Activated CD8-positive, alpha-beta T cell treated with anti-CD3 and anti-CD28 coated beads for 36 hours (primary cell): ENCODE measurements at regions of chr7 and their contacts with region 1.

Region 1: GRCh38 chr7:5677538-5678294 is 103.7 kb downstream of the RNF216 start:
- DNase-seq: peak; percentile 70
- ATAC-seq: peak; percentile 52
- H3K4me3 Mint-ChIP-seq: no peak overlapping the region
- H3K27ac Mint-ChIP-seq: peak overlapping the region; percentile 53
- H3K4me1 Mint-ChIP-seq: peaks cover 55% of the 10 kb centered on the region
- H3K27me3 Mint-ChIP-seq: no peaks in the 10 kb centered on the region
- CTCF ChIP-seq: peak; percentile 47

Region 2: GRCh38 chr7:5501465-5501864 is 176.3 kb before region 1 on chr7:
- CTCF ChIA-PET with region 1: no interaction called
- POLR2A ChIA-PET with region 1: no interaction called
- intact Hi-C with region 1: no loop called
- DNase-seq: no peak
- ATAC-seq: no peak
- H3K4me3 Mint-ChIP-seq: no peak overlapping the region
- H3K27ac Mint-ChIP-seq: no peak overlapping the region
- H3K4me1 Mint-ChIP-seq: peaks cover 12% of the 10 kb centered on the region
- H3K27me3 Mint-ChIP-seq: no peaks in the 10 kb centered on the region
- CTCF ChIP-seq: no peak

Region 3: GRCh38 chr7:5689118-5689517 is 11.4 kb after region 1 on chr7:
- CTCF ChIA-PET with region 1: interaction called, 14 read pairs
- POLR2A ChIA-PET with region 1: interaction called, 6 read pairs
- intact Hi-C with region 1: no loop called
- DNase-seq: peak; percentile 87
- ATAC-seq: peak; percentile 65
- H3K4me3 Mint-ChIP-seq: peak overlapping the region; percentile 57
- H3K27ac Mint-ChIP-seq: peak overlapping the region; percentile 97
- H3K4me1 Mint-ChIP-seq: peaks cover 93% of the 10 kb centered on the region
- H3K27me3 Mint-ChIP-seq: no peaks in the 10 kb centered on the region
- CTCF ChIP-seq: no peak

Region 4: GRCh38 chr7:5694912-5695726 is 17.4 kb after region 1 on chr7:
- CTCF ChIA-PET with region 1: interaction called, 57 read pairs
- POLR2A ChIA-PET with region 1: interaction called, 6 read pairs
- intact Hi-C with region 1: no loop called
- DNase-seq: peak; percentile 87
- ATAC-seq: peak; percentile 75
- H3K4me3 Mint-ChIP-seq: peak overlapping the region; percentile 86
- H3K27ac Mint-ChIP-seq: peak overlapping the region; percentile 95
- H3K4me1 Mint-ChIP-seq: peaks cover 98% of the 10 kb centered on the region
- H3K27me3 Mint-ChIP-seq: no peaks in the 10 kb centered on the region
- CTCF ChIP-seq: no peak

Region 5: DNA sequence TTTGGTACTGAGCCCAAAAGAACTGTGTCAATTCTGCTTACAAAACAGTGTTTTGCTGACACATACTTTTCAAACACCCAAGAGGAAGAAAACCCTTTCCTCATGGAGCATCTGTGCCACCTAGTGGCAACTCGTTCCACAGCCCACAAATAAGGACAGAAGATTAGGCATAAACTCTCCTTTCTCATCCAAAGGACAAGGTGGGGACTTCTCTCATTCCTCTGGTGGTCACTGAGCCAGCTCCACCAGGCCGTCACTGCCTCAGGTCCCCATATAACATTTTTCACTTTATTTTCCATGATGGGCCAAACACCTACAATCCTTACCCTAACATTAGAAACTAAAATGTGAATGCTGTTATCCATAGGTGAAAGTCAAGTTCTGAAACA is 26.8 kb after region 1 on chr7:
- CTCF ChIA-PET with region 1: interaction called, 57 read pairs
- POLR2A ChIA-PET with region 1: interaction called, 5 read pairs
- intact Hi-C with region 1: no loop called
- DNase-seq: peak; percentile 87
- ATAC-seq: no peak
- H3K4me3 Mint-ChIP-seq: no peak overlapping the region
- H3K27ac Mint-ChIP-seq: no peak overlapping the region
- H3K4me1 Mint-ChIP-seq: peaks cover 80% of the 10 kb centered on the region
- H3K27me3 Mint-ChIP-seq: no peaks in the 10 kb centered on the region
- CTCF ChIP-seq: peak; percentile 85